Activated CD8-positive, alpha-beta memory T cell treated with anti-CD3 and anti-CD28 coated beads, Interleukin-2, amount 10 ng/mL, durations not matched to agents 7 days and 5 days (primary cell): ENCODE measurements at regions of chr19 and their contacts with region 1.

Region 1: GRCh38 chr19:46009530-46010510 is 13.0 kb downstream of the PGLYRP1 start:
- DNase-seq: peak; percentile 69
- ATAC-seq: peak; percentile 60
- H3K4me3 Mint-ChIP-seq: no peak overlapping the region
- H3K27ac Mint-ChIP-seq: no peak overlapping the region
- H3K4me1 Mint-ChIP-seq: peaks cover 4% of the 10 kb centered on the region
- H3K27me3 Mint-ChIP-seq: peaks cover 6% of the 10 kb centered on the region

Region 2: DNA sequence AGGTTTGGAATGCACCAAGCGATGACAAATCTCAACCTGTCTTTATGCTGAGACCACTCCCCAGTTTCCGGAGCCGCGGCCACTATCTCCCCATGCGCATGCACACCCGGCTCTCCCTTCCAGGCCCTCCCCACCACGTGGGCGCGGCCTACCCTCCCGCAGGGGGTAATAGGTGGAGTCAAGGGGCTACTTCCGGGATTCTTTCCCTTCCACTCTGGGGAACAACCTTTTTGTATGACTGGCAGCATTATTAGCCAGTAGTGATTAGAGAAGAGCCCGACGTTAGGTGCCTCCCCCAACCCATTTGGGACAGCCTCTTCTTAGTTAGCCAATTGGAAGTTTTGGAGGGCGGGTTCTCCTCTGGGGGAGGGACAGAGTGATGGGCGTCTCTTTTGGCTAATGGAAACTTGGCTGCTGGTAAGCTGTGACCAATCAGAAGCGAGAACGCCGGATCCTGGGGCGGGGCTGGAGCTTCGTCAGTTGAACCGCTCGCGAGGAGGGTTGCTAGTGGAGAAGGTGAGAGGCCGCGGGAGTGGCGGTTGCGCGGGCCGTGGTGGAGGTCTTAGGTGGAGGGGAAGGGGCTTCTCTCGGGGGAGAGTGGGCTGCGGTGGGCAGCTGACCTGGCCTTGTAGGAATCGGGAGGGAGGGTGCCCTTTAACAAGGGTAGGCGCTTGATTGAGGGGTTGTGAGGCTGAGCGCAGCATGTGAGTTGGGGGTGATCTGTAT is 14.7 kb before region 1 on chr19 and contains the start of gene CCDC61:
- CTCF ChIA-PET with region 1: interaction called, 11 read pairs
- DNase-seq: peak; percentile 97
- ATAC-seq: peak; percentile 98
- H3K4me3 Mint-ChIP-seq: no peak within 1 kb of the TSS
- H3K27ac Mint-ChIP-seq: no peak within 1 kb of the TSS
- H3K4me1 Mint-ChIP-seq: peaks cover 21% of the 10 kb centered on the region
- H3K27me3 Mint-ChIP-seq: peaks cover 4% of the 10 kb centered on the region
- total RNA-seq, gene CCDC61: 24.4 to 35.1 TPM

Region 3: DNA sequence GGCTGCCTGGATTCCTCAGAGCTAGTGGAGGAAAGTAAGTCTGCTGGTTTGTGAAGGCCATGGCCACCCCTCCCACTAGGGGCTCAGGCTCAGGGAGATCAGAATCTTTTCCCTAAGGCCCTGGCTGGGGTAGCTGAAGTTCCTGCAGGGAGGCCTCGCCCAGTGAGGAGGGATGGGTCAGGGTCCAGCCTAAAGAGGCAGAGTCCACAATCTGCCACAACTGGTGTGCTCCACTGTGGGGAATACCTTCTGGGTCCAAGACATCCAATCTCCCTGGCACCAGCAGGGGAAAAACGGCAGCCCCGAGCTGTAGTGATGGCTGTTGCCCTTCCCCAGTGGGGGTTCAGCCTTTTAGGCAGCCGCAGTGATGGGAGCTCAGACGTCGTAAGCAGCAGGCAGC is 91.5 kb after region 1 on chr19:
- CTCF ChIA-PET with region 1: no interaction called
- DNase-seq: no peak
- ATAC-seq: no peak
- H3K4me3 Mint-ChIP-seq: no peak overlapping the region
- H3K27ac Mint-ChIP-seq: no peak overlapping the region
- H3K4me1 Mint-ChIP-seq: no peaks in the 10 kb centered on the region
- H3K27me3 Mint-ChIP-seq: peaks cover 38% of the 10 kb centered on the region